ENCODE measurements at regions of chr1 and their contacts with region 1.

Region 1: DNA sequence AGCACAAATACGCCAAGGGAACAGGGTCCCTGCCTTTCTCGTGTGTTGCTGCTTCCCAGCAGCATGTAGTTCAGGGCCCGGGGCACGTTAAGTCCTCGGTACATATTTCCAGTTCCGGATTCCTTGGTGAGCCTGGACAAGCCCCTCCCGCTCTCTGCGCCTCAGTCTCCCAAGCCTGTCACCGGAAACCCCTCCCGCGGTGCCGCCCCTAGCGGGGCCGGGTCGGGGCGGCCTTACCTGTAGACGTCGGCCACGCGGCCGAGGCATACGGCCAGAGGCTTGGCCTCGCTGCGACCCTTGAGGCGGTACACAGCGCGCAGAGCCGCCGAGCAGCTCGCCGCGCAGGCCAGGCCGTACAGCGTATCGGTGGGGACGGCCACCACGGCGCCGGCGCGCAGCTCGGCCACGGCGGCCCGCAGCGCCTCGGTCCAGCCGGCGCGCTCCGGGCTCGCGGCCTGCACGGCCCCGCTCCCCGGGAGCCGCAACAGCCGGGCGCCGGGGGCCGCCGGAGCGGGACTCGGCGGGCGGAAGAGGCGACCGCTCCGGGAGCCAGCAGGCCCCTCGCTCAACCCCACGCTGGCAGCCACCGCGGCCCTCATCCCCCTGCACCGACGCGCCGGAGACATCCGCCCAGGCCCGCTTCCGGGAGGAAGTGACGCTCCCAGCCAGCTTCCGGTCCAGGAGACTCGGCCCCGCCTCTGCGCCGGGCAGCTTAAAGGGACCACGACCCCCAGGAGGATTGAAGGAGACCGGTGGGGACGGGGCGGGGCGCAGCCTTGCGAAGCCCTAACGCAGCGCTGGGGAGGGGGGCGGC is at the starts of genes C1orf122 and YRDC:
- DNase-seq: peak; percentile 94 to 95
- H3K4me3 ChIP-seq: peak within 1 kb of the TSS; percentile 68 to 95
- H3K27ac ChIP-seq: peak within 1 kb of the TSS; percentile 89 to 96
- H3K4me1 ChIP-seq: peaks cover 0 to 40% (median 30%) of the 10 kb centered on the region in 4 donors
- H3K27me3 ChIP-seq: no peaks in the 10 kb centered on the region
- CTCF ChIP-seq: no peak

Region 2: DNA sequence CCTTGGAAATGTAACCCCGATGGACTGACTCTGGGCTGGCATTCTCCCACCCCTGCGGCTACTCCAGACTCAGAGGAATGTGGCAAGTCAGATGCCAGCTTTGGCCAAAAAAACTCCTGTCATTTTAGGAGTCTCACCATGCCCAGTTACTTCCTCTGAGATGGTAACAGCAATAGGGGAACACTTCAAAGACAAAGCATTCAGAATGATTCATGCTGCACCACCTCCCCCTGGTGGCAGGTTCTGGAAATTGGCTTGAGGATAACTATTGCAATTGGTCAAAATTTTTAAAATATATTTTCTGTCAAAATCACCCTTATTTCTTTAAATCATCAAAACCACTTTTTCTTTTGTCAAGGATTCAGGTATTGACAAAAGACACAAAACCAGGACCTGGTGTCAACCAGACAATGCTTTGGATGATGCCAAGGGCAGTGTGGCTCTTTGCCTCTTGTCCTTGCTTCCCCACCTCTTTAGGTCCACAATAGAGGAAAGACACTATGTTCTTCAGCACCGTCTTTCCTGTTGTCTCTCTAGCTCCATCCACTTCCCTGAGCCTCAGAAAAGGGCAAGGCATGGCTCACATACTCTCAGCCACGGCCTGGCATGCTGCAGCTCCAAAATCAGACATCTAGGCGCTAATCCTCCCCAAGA is 125.3 kb before region 1 on chr1:
- intact Hi-C with region 1: loop called (anchors 10 kb)
- DNase-seq: peak; percentile 74 to 81
- H3K4me3 ChIP-seq: no peak overlapping the region
- H3K27ac ChIP-seq: peak overlapping the region in 1 of 2 donors; percentile 32
- H3K4me1 ChIP-seq: no peaks in the 10 kb centered on the region
- H3K27me3 ChIP-seq: no peaks in the 10 kb centered on the region
- CTCF ChIP-seq: peak; percentile 85 to 88

Region 3: DNA sequence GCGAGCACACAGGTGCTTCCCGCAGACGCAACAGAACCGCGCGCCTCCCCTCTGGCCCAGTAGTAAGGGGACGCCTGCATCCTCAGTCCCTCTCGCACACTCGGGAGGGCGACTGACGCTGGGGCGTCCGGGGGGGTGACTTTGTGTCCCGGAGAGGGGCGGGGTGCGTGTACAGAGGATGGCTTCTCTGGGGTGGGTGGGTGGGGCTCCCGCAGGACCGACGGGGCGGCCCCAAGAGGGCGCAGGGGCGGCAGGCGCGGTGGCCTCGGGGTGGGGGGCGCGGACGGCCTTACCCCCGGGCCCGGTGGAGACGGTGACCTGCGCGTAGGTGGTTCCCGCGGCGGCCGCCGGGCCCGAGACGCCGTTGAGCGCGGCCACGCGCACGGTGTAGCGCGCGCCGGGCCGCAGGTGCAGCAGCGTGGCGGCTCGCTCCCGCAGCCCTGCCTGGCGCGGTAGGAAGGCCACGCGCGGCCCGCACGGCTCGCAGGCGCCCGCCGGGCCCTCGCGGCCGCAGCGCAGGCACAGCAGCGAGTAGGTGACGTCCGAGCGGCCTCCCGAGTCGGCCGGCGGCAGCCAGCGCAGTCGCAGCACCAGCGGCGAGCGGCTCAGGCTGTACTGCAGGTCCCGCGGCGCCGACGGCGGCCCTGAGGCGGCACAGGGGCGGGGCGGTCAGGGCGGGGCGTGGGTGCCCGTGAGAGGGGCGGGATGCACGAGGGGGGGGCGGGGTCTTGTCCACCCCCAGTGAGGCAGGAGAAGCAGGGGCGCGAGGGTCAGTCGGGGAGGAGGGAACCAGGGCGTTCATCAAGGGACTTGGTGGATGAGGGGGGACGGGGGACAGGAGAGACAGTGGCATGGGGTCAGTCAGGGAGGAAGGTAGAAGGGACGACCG is 54.9 kb before region 1 on chr1:
- intact Hi-C with region 1: no loop called
- DNase-seq: no peak
- H3K4me3 ChIP-seq: peak overlapping the region; percentile 16 to 36
- H3K27ac ChIP-seq: no peak overlapping the region
- H3K4me1 ChIP-seq: peaks cover 0 to 16% (median 5%) of the 10 kb centered on the region in 4 donors
- H3K27me3 ChIP-seq: peaks cover 0 to 76% of the 10 kb centered on the region in 2 donors
- CTCF ChIP-seq: no peak

Region 4: DNA sequence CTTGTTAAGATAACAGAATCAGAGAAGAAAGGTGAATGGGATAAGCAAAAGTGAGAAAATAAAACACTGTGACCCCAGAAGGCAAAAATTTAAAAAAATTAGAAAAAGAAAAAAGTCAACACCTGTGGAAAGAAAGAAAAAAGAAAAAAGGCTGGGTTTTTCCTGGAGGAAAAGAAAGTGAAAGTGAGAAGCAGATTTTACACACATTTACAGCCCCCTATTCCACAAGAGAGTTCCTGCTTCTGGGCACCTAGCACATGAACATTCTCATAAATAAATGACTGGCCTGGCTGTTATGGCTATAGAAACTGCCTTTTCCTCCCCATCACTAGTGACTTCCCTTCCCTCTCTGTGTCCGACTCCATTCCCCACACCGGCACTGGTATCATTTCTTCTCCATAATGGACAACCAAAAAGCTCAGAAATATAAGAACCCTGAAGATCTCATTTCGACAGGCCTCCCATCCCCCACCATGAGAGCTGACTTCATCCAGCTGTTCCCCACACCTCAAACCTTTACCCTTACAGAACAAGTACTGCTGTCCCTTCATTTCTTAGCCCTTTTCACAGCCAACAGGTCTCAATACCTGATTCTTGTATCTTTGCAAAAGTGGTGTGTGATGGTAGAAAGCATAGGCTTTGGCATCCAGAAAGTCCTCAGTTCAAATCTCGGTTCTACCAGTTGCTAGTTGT is 39.0 kb after region 1 on chr1:
- intact Hi-C with region 1: no loop called
- DNase-seq: no peak
- H3K4me3 ChIP-seq: no peak overlapping the region
- H3K27ac ChIP-seq: no peak overlapping the region
- H3K4me1 ChIP-seq: peaks cover 0 to 23% (median 3%) of the 10 kb centered on the region in 4 donors
- H3K27me3 ChIP-seq: no peaks in the 10 kb centered on the region
- CTCF ChIP-seq: no peak

Region 5: GRCh38 chr1:37859507-37860345 is 52.0 kb after region 1 on chr1 and contains the start of gene MTF1:
- intact Hi-C with region 1: loop called (anchors 5 kb)
- DNase-seq: peak; percentile 97 to 99
- H3K4me3 ChIP-seq: peak within 1 kb of the TSS; percentile 80 to 82
- H3K27ac ChIP-seq: peak within 1 kb of the TSS; percentile 85 to 91
- H3K4me1 ChIP-seq: peaks cover 0 to 48% (median 37%) of the 10 kb centered on the region in 4 donors
- H3K27me3 ChIP-seq: no peaks in the 10 kb centered on the region
- CTCF ChIP-seq: peak; percentile 83 to 89

Region 6: GRCh38 chr1:38088366-38088765 is 280.6 kb after region 1 on chr1:
- intact Hi-C with region 1: no loop called
- DNase-seq: no peak
- H3K4me3 ChIP-seq: no peak overlapping the region
- H3K27ac ChIP-seq: no peak overlapping the region
- H3K4me1 ChIP-seq: no peaks in the 10 kb centered on the region
- H3K27me3 ChIP-seq: peaks cover 0 to 39% of the 10 kb centered on the region in 2 donors
- CTCF ChIP-seq: no peak

Measured in tibial artery (tissue), 4 donors.